ENCODE measurements at regions of chr11 and their contacts with region 1.

Region 1: DNA sequence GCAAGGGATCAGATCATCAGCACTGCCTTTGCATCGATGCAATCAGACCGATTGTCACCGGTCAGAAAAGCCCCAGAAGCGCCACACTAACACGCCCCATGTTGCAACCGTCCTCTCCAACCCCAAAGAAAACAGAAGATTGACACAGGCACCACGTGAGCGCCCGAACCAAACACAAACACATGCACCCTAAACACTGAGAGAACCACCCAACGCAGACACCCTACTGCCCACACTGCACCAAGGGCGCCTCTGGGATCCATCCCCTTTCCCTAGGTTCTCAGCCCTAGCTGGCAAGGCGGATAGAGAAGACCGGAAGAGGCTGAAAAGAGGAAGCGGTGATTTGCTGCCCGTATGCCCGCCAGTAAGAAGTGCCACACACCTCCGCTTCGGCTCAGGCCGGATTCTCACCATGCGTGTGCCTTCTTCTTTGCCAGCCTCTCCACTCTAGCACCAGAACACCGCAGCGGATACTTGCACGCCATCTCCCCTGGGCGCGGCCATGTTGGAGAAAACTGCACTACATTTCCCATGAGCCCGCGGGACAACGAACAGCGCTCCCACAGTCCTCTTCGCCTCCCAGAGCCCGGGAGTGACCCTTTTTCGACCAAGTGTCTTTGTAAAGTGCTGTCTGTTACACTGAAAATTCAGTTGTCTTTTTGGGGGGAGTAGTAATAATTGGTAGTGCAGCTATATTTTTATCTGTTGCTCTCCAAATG is at the start of gene ALKBH8:
- DNase-seq: peak; percentile 89
- H3K4me3 Mint-ChIP-seq: peak within 1 kb of the TSS; percentile 85
- H3K27ac Mint-ChIP-seq: peak within 1 kb of the TSS; percentile 92
- H3K4me1 Mint-ChIP-seq: peaks cover 48% of the 10 kb centered on the region
- H3K27me3 Mint-ChIP-seq: no peaks in the 10 kb centered on the region
- total RNA-seq, gene ALKBH8: 10.1 to 12.2 TPM

Region 2: DNA sequence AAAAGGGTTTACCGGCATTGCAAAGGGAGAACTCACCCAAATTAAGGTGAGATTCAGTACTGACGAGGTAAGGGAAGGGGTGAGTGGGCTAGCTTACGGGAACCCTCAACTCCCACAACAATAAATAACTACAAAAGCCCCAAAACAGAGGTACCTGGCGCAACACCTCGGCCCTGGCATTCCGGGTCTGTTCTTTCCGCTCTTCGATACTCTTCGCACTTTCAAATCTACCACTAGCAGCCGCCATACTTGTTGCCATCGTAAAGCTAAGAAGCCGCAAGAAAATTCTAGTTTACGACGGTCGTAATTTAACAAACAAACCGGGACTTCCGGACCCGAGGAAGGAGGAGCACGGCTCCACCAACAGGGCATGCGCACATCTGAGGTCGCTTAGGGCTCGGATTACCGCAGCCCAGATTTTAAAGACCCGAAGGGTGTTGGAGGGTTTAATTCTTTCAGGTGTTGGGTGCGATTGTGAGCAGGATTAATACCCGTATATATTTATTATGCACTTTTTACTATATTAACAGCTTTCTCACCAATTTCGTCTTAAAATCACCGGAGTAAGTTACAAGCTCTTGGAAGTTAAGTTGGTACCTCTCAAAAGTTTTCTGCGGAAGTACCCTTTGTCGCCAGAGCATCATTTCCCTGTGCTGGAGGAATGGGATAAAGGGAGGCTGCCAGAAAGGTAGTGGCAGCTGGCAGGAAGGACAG is 107.7 kb before region 1 on chr11 and contains the start of gene CWF19L2:
- CTCF ChIA-PET with region 1: no interaction called
- intact Hi-C with region 1: loop called (anchors 1 kb)
- DNase-seq: peak; percentile 94
- H3K4me3 Mint-ChIP-seq: peak within 1 kb of the TSS; percentile 95
- H3K27ac Mint-ChIP-seq: peak within 1 kb of the TSS; percentile 90
- H3K4me1 Mint-ChIP-seq: peaks cover 26% of the 10 kb centered on the region
- H3K27me3 Mint-ChIP-seq: no peaks in the 10 kb centered on the region
- total RNA-seq, gene CWF19L2: 16.9 to 17.9 TPM

Region 3: GRCh38 chr11:107606141-107606540 is 40.8 kb after region 1 on chr11:
- CTCF ChIA-PET with region 1: interaction called, 3 read pairs
- intact Hi-C with region 1: loop called (anchors 5 kb)
- DNase-seq: no peak
- H3K4me3 Mint-ChIP-seq: no peak overlapping the region
- H3K27ac Mint-ChIP-seq: no peak overlapping the region
- H3K4me1 Mint-ChIP-seq: no peaks in the 10 kb centered on the region
- H3K27me3 Mint-ChIP-seq: peaks cover 48% of the 10 kb centered on the region

Region 4: GRCh38 chr11:107840129-107840484 is 274.7 kb after region 1 on chr11:
- CTCF ChIA-PET with region 1: no interaction called
- intact Hi-C with region 1: loop called (anchors 1 kb)
- DNase-seq: no peak
- H3K4me3 Mint-ChIP-seq: no peak overlapping the region
- H3K27ac Mint-ChIP-seq: peak overlapping the region; percentile 93
- H3K4me1 Mint-ChIP-seq: peaks cover 68% of the 10 kb centered on the region
- H3K27me3 Mint-ChIP-seq: no peaks in the 10 kb centered on the region

Region 5: DNA sequence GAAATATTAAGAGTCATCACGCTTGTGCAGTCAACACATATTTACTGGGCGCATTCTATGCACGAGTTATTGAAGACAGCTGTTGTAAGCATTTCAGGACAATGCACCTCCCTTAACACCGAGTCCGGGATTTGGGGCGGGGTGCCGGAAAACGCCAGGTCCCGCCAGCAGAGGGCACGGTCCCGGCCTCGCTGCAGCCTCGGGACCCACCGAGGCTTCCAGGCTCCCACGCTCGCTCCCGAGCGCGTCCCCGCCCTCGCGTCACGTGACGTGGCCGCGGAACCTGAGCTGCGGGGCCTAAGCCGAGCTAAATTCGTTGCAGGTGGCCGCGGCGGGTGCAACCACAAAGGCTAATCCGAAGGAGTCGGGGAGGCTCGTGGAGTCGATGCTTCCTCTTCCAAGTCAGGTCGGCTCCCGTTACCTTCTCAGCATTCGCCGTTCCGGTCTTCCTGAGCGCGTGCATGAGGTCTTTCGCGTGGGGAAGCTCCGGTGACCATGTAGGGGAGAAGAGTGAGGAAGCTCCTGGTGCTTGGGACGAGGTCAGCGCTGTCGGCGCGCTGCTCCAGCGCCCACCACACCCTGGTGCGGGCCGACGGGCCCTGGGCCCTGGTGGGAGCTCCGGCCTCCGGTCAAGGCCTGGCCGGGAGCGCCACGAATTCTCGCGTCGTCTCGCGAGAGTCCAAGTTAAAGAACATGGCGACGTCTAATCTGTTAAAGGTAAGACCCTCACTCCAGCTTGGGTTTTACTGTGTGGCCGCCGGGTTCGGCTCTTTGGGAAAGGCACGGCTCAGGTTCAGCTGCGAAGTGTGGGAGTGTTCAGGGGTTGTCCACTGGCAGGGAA is 443.5 kb after region 1 on chr11 and contains the start of gene CUL5:
- CTCF ChIA-PET with region 1: no interaction called
- intact Hi-C with region 1: loop called (anchors 2 kb)
- DNase-seq: peak; percentile 92
- H3K4me3 Mint-ChIP-seq: peak within 1 kb of the TSS; percentile 93
- H3K27ac Mint-ChIP-seq: peak within 1 kb of the TSS; percentile 76
- H3K4me1 Mint-ChIP-seq: peaks cover 15% of the 10 kb centered on the region
- H3K27me3 Mint-ChIP-seq: no peaks in the 10 kb centered on the region
- total RNA-seq, gene CUL5: 25.9 to 26.2 TPM

Region 6: DNA sequence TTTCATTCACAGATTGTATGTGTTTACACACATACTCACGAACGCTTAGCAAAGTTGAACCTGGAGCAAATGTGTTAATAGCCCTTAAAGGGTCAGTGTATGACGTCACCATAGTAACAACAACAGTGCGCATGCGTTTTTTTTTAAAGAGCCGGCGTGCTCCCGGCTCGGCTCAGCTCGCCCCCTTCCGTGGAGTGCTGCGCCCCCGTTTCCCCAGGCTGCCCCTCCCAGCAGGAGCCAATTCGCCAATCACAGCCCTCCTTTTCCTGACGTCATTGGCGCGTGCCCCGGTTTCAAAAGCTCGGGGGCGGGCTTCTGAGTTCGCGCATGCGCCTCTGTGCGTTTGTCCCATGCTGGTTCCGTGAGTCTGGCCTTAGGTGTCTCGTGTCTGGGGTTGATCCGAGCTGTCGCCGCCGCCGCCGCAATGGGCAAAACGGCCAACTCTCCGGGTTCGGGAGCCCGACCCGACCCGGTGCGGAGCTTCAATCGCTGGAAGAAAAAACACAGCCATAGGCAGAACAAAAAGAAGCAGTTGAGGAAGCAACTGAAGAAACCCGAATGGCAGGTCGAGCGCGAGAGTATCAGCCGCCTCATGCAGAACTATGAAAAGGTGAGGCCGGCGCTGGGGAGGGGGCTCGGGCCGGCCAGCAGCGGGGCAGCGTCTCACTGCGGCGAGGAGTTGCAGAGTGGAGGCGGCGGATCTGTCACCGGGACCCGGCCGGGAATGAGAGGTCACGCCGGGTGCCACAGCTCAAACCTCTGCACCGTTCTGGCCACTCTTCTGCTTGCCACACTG is 1099.5 kb after region 1 on chr11 and contains the start of gene DDX10:
- CTCF ChIA-PET with region 1: no interaction called
- intact Hi-C with region 1: loop called (anchors 5 kb)
- DNase-seq: peak; percentile 99
- H3K4me3 Mint-ChIP-seq: peak within 1 kb of the TSS; percentile 99
- H3K27ac Mint-ChIP-seq: peak within 1 kb of the TSS; percentile 86
- H3K4me1 Mint-ChIP-seq: peaks cover 38% of the 10 kb centered on the region
- H3K27me3 Mint-ChIP-seq: no peaks in the 10 kb centered on the region
- total RNA-seq, gene DDX10: 36.6 to 43.0 TPM